ENCODE measurements at regions of chr16 and their contacts with region 1.

Region 1: GRCh38 chr16:21698169-21699032 is 34.6 kb downstream of the OTOA start:
- DNase-seq: no peak
- H3K4me3 ChIP-seq: no peak overlapping the region
- H3K27ac ChIP-seq: no peak overlapping the region
- H3K4me1 ChIP-seq: peaks cover 0 to 2% (median 1%) of the 10 kb centered on the region in 4 experiments; a peak in 2 of 7 replicates
- H3K27me3 ChIP-seq: no peaks in the 10 kb centered on the region
- CTCF ChIP-seq: peak in 1 of 3 experiments; percentile 7; a peak in 2 of 4 replicates
- EP300 ChIP-seq: no peak
- POLR2A ChIP-seq: no peak
- RAD21 ChIP-seq: peak; percentile 10 to 19; a peak in 2 of 4 replicates

Region 2: DNA sequence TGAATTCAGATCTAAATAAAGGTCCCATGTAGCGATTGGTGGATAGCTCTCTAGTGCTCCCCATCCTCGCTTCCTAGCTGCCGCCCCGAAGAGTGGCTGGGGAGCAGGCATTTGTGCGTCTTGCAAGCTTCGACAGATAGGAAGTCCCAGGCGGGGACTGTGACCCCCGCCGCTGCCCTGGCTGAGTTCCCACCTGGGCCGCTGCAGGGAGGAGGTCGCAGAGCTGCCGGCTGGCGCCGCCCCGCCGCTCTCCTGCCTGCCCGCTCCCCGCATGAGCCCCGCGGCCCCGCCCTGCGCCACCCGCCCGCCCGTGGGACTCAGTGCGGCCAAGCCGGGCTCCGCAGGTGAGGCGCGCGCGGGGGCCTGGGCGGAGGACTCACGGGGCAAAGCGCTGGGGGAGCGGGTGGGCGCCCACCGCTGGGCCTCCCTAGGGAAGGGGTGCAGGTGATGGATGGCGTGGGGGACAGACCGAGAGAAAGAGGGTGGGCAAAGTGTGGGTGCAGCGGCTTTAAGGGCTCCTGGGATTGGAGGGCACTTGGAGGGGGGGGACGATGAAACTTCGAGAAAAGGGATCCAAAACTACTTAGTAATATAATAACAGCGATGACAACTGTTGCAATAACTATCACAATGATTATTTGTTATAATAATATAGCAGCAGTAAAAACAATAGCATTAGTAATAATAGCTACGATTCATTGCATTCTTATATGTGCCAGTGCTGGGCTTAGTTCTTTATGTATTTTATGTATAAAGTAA is 34.3 kb before region 1 on chr16 and contains the start of gene OTOA:
- CTCF ChIA-PET with region 1: interaction called, 13 read pairs
- POLR2A ChIA-PET with region 1: no interaction called
- DNase-seq: peak; percentile 29 to 71
- H3K4me3 ChIP-seq: peak within 1 kb of the TSS in 2 of 4 experiments; percentile 43 to 57; a peak in 5 of 8 replicates
- H3K27ac ChIP-seq: no peak within 1 kb of the TSS
- H3K4me1 ChIP-seq: peaks cover 0 to 9% (median 2%) of the 10 kb centered on the region in 4 experiments; a peak in 4 of 7 replicates
- H3K27me3 ChIP-seq: no peaks in the 10 kb centered on the region
- CTCF ChIP-seq: no peak
- EP300 ChIP-seq: no peak
- POLR2A ChIP-seq: no peak
- RAD21 ChIP-seq: no peak
- total RNA-seq, gene OTOA: 0.32 TPM in 1 of 2 replicates, not detected in the other

Region 3: GRCh38 chr16:21684199-21684598 is 14.2 kb before region 1 on chr16:
- CTCF ChIA-PET with region 1: interaction called, 93 read pairs
- POLR2A ChIA-PET with region 1: no interaction called
- DNase-seq: peak in 1 of 2 experiments; percentile 82
- H3K4me3 ChIP-seq: no peak overlapping the region
- H3K27ac ChIP-seq: no peak overlapping the region
- H3K4me1 ChIP-seq: no peaks in the 10 kb centered on the region
- H3K27me3 ChIP-seq: no peaks in the 10 kb centered on the region
- CTCF ChIP-seq: peak; percentile 72 to 85 (median 75)
- EP300 ChIP-seq: no peak
- POLR2A ChIP-seq: no peak
- RAD21 ChIP-seq: peak; percentile 33 to 59; a peak in 3 of 4 replicates

Region 4: DNA sequence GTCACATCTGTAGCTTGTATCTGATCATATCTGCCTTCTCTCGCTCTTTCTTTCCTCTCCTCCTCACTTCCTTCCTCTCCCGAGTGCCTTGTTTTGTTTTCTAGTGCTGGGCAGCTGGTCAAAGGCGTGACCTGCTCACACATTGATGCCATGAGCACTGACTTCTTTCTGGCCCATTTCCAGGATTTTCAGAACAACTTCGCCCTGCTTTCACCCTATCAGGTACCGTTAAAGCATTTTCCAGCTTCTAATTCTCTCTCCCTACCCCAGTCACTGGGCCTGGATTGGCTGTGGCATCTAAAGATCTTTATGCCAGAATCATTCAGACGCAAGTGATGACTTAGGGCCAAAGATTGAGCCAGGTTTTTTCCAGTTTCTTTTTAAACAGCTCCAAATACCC is 20.9 kb after region 1 on chr16:
- CTCF ChIA-PET with region 1: no interaction called
- POLR2A ChIA-PET with region 1: no interaction called
- DNase-seq: no peak
- H3K4me3 ChIP-seq: no peak overlapping the region
- H3K27ac ChIP-seq: no peak overlapping the region
- H3K4me1 ChIP-seq: no peaks in the 10 kb centered on the region
- H3K27me3 ChIP-seq: no peaks in the 10 kb centered on the region
- CTCF ChIP-seq: no peak
- EP300 ChIP-seq: no peak
- POLR2A ChIP-seq: no peak
- RAD21 ChIP-seq: no peak

Measured in H1 (cell line).